ENCODE measurements at regions of chr4 and their contacts with region 1.

Region 1: DNA sequence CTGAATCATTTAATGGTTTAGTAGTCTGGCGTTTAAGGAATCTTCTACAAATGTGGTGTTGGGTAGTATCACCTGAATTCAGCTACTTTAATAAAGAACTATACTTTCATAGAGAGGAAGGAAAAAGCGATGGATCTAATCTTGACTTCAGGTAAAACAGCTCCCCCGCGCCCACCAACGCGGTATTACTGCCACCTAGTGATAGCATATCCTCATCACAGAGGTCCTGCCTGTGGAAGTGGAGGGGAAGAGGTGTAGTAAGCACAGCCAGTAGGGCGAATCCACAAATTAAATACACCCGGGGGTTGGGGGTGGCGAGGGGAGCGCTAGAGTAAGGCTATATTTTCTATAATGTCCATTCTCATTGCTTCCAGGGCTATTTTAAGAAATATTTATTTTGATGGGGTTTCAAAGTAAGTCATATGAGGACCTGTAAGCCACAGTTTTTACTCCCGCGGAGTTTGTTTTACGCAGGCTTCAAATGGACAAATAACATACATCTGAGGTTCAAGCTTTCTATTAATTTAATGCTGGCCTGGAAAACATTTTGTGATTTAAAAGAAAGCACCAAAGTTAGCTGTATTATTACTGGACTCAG is 8.3 kb upstream of the DAPP1 start:
- DNase-seq: peak; percentile 40 to 47
- ATAC-seq: peak in 7 of 8 donors; percentile 42 to 86 (median 78)
- H3K4me3 ChIP-seq: no peak overlapping the region
- H3K27ac ChIP-seq: no peak overlapping the region
- H3K4me1 ChIP-seq: peaks cover 0 to 8% (median 0%) of the 10 kb centered on the region in 9 donors
- H3K27me3 ChIP-seq: peaks cover 0 to 3% (median 0%) of the 10 kb centered on the region in 7 donors
- CTCF ChIP-seq: peak; percentile 39 to 74 (median 69)

Region 2: GRCh38 chr4:99624141-99624719 is 184.1 kb before region 1 on chr4:
- intact Hi-C with region 1: loop called in 1 of 10 experiments (anchors 10 kb)
- DNase-seq: no peak
- ATAC-seq: no peak
- H3K4me3 ChIP-seq: no peak overlapping the region
- H3K27ac ChIP-seq: no peak overlapping the region
- H3K4me1 ChIP-seq: no peaks in the 10 kb centered on the region
- H3K27me3 ChIP-seq: no peaks in the 10 kb centered on the region
- CTCF ChIP-seq: no peak

Region 3: DNA sequence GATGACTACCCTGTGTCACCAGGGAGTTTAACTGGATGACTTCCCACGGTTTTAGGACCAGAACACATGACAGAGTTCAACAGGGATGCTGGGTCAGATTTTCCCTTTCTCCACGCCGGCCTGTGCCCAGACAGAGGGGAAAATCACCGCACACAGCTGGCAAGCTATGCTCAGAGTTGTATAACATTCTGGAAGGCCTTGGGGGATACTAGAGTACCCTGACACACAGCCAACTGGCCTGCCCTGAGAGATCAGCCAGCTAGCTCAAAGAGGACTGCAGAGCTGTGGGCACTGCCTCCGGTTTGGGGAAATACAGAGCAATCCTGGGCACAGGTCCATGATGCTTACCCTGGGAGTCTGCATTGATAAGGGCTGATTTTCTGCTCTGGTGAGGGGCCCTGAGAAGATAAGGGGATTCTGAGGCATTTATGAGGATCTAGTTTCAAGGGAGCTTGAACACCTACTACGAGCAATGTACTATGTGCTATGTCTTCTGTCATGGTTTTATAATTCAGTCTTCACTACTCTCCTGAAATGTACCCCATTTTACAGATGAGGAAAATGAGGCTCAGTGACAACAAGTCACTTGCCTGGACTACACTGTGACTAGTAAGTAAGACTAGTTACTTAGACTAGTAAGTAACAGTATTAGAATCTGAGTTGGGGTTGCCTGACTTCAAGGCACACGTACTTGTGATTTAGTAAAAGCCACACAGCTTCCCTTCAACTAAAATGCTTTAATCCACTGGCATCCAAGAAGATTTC is 165.5 kb before region 1 on chr4:
- intact Hi-C with region 1: loop called in 1 of 10 experiments (anchors 10 kb)
- DNase-seq: peak; percentile 68 to 79
- ATAC-seq: peak; percentile 91 to 99 (median 96)
- H3K4me3 ChIP-seq: no peak overlapping the region
- H3K27ac ChIP-seq: peak overlapping the region in 7 of 10 donors; percentile 7 to 72 (median 56)
- H3K4me1 ChIP-seq: peaks cover 0 to 29% (median 13%) of the 10 kb centered on the region in 9 donors
- H3K27me3 ChIP-seq: no peaks in the 10 kb centered on the region
- CTCF ChIP-seq: no peak

Region 4: DNA sequence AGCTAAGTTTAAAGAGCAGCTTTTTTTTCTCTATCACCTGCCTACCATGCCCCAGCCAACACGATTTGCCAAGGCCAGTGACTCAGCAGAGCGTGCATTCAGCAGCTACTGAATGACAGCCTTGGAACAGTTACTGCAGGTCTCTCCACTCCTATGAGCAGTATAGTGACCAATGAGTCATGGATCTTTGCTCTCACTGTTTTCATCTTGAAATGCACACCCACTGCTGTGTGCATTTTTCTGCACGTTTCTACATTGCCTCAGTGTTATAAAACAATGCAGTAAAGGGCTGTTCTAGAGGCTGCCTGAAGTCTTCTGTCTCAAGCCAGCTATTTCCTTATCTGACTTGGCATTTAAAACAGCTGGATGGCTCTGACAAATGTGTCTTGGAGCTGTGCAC is 84.7 kb before region 1 on chr4:
- intact Hi-C with region 1: loop called in 4 of 10 experiments (anchors 5 to 10 kb)
- DNase-seq: peak; percentile 55 to 58
- ATAC-seq: peak; percentile 81 to 98 (median 95)
- H3K4me3 ChIP-seq: no peak overlapping the region
- H3K27ac ChIP-seq: peak overlapping the region; percentile 5 to 83 (median 63)
- H3K4me1 ChIP-seq: peaks cover 0 to 35% (median 11%) of the 10 kb centered on the region in 9 donors
- H3K27me3 ChIP-seq: no peaks in the 10 kb centered on the region
- CTCF ChIP-seq: no peak

Region 5: GRCh38 chr4:99729186-99729585 is 79.2 kb before region 1 on chr4:
- intact Hi-C with region 1: loop called in 4 of 10 experiments (anchors 5 to 10 kb)
- DNase-seq: no peak
- ATAC-seq: no peak
- H3K4me3 ChIP-seq: no peak overlapping the region
- H3K27ac ChIP-seq: no peak overlapping the region
- H3K4me1 ChIP-seq: peaks cover 0 to 3% (median under 1%) of the 10 kb centered on the region in 9 donors
- H3K27me3 ChIP-seq: no peaks in the 10 kb centered on the region
- CTCF ChIP-seq: no peak

Region 6: DNA sequence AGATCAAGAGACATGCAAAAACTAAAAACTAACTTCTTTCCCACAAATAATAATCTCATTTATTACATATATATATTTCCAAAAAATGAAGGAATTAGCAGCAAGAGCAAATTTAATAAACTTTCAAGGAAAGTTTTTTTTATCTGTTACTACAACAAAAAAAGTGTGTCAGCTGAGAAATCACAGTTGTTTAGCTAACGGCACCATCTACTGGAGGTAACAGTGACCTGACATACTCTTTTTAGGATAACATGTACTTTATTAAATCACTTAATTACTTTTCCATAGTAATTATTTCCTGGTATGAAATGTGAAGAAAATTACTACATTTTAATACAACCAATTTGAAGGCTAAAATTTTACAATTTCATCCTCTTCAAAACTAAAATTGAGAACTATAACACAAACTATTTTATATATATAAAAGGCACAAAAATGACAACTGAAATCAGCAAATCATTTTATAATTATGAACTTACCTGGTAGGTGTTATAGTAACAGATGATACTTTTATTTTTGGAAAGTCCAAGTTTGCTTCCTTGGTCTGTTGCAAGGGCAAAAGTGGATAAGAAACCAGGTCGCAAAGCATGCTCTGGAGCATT is 76.8 kb after region 1 on chr4:
- intact Hi-C with region 1: loop called in 3 of 10 experiments (anchors 5 to 10 kb)
- DNase-seq: no peak
- ATAC-seq: no peak
- H3K4me3 ChIP-seq: no peak overlapping the region
- H3K27ac ChIP-seq: no peak overlapping the region
- H3K4me1 ChIP-seq: peaks cover 0 to 23% (median 7%) of the 10 kb centered on the region in 9 donors
- H3K27me3 ChIP-seq: no peaks in the 10 kb centered on the region
- CTCF ChIP-seq: peak in 8 of 9 donors; percentile 26 to 60 (median 51)

Region 7: GRCh38 chr4:99949034-99949998 is 141.0 kb after region 1 on chr4:
- intact Hi-C with region 1: loop called in 3 of 10 experiments (anchors 5 to 10 kb)
- DNase-seq: peak; percentile 79 to 90
- ATAC-seq: peak; percentile 10 to 50 (median 40)
- H3K4me3 ChIP-seq: peak overlapping the region; percentile 67 to 95 (median 80)
- H3K27ac ChIP-seq: peak overlapping the region; percentile 14 to 96 (median 88)
- H3K4me1 ChIP-seq: peaks cover 3 to 52% (median 45%) of the 10 kb centered on the region in 9 donors
- H3K27me3 ChIP-seq: no peaks in the 10 kb centered on the region
- CTCF ChIP-seq: peak; percentile 76 to 92 (median 86)

Region 8: GRCh38 chr4:99960648-99961047 is 152.3 kb after region 1 on chr4:
- intact Hi-C with region 1: no loop called
- DNase-seq: no peak
- ATAC-seq: no peak
- H3K4me3 ChIP-seq: no peak overlapping the region
- H3K27ac ChIP-seq: no peak overlapping the region
- H3K4me1 ChIP-seq: no peaks in the 10 kb centered on the region
- H3K27me3 ChIP-seq: peaks cover 0 to 4% (median 0%) of the 10 kb centered on the region in 7 donors
- CTCF ChIP-seq: no peak